ENCODE measurements at regions of chr3 and their contacts with region 1.

Region 1: DNA sequence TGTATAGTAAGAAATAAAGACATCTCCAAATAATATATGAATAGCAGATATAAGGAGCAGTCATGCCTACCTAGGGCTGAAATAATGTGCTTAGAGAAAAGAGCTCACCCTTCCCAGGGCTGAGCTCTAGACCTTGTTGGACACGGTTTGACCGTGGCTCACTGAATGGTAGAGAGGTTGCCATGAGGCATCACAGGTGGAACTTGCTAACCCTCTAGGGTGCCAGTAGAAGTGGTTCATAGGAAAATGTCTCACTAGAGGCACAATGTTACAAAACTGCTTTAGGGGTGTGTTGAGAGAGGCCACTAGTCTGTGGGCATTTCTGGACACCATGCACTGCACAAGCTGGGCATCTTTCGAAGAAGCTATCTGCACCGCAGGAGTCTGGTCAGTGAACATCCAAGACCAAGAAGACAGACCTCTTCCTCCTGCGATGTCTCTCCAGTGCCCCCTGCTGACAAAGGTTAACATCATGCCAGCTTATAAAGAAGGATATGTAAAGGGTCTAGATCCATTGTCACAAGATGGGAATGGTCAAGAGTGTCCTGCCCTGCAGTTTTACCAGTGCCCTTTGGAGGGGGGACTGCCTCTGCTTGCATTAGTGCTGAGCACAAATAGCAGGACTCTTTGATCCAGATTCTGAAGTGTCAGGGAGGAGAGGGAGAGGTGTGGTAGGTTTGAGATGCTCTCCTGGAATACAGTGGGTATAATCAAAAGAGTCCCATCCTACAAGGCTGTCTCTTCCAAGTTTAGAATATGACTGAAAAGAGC is 266.8 kb downstream of the ZNF385D start:
- DNase-seq: peak; percentile 81
- ATAC-seq: peak; percentile 83
- H3K4me3 ChIP-seq: no peak overlapping the region
- H3K27ac ChIP-seq: no peak overlapping the region
- H3K4me1 ChIP-seq: peaks cover 9% of the 10 kb centered on the region
- H3K27me3 ChIP-seq: no peaks in the 10 kb centered on the region
- CTCF ChIP-seq: peak; percentile 86

Region 2: GRCh38 chr3:20225769-20226168 is 1258.5 kb before region 1 on chr3:
- CTCF ChIA-PET with region 1: interaction called, 3 read pairs
- POLR2A ChIA-PET with region 1: no interaction called
- intact Hi-C with region 1: loop called (anchors 2 kb)
- DNase-seq: peak; percentile 61
- ATAC-seq: peak; percentile 85
- H3K4me3 ChIP-seq: no peak overlapping the region
- H3K27ac ChIP-seq: no peak overlapping the region
- H3K4me1 ChIP-seq: no peaks in the 10 kb centered on the region
- H3K27me3 ChIP-seq: 0 out of 2 replicates have a peak, but pooled peaks cover 4% of the 10 kb centered on the region
- CTCF ChIP-seq: peak; percentile 70

Region 3: DNA sequence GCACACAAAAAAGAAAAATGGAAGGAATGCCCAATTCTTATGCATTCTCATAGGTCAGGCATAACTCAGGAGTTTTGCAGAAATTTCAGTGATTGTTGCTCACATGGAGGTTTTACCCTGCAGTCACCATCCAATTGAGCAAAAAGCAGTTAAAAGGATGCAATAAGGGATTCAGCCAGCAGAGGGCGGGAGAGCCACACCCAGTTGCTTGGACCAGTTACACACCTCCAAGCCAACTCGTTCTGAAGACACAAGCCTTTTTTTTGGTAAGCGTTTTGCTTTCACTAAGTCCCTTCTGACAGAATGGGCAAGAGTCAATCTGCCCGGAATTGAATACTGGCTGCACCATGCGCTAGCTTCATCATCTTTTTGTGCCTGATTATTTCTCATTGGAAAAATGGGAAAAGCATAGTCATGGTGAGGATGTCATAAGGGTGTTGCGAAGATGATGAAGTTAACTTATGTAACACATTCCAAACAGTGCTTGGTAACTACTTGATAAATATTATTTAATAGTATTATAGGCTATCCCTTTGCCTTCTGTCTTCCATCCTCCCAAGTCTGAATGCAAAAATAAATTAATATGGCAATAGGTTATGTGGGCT is 1143.8 kb before region 1 on chr3:
- CTCF ChIA-PET with region 1: no interaction called
- POLR2A ChIA-PET with region 1: no interaction called
- intact Hi-C with region 1: loop called (anchors 10 kb)
- DNase-seq: peak; percentile 82
- ATAC-seq: peak; percentile 85
- H3K4me3 ChIP-seq: no peak overlapping the region
- H3K27ac ChIP-seq: no peak overlapping the region
- H3K4me1 ChIP-seq: no peaks in the 10 kb centered on the region
- H3K27me3 ChIP-seq: no peaks in the 10 kb centered on the region
- CTCF ChIP-seq: peak; percentile 95

Region 4: DNA sequence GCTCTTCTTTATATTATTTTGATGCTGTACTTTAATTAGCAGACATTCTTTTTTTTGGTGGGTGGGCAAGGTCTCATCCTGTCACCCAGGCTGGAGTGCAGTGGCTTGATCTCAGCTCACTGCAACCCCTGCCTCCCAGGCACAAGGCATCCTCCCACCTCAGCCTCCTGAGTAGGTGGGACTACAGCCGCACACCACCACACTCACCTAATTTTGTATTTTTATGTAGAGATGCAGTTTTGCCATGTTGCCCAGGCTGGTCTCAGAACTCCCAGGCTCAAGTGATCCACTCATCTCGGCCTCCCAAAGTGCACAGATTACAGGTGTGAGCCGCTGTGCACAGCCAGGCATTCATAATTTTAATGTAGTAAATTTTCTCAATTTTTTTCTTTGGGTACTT is 341.3 kb before region 1 on chr3:
- CTCF ChIA-PET with region 1: no interaction called
- POLR2A ChIA-PET with region 1: no interaction called
- intact Hi-C with region 1: loop called (anchors 10 kb)
- DNase-seq: no peak
- ATAC-seq: no peak
- H3K4me3 ChIP-seq: no peak overlapping the region
- H3K27ac ChIP-seq: no peak overlapping the region
- H3K4me1 ChIP-seq: no peaks in the 10 kb centered on the region
- H3K27me3 ChIP-seq: no peaks in the 10 kb centered on the region
- CTCF ChIP-seq: no peak

Measured in PC-3 (cell line).